Mammary epithelial cell (primary cell): ENCODE measurements at regions of chr1 and their contacts with region 1.

Region 1: DNA sequence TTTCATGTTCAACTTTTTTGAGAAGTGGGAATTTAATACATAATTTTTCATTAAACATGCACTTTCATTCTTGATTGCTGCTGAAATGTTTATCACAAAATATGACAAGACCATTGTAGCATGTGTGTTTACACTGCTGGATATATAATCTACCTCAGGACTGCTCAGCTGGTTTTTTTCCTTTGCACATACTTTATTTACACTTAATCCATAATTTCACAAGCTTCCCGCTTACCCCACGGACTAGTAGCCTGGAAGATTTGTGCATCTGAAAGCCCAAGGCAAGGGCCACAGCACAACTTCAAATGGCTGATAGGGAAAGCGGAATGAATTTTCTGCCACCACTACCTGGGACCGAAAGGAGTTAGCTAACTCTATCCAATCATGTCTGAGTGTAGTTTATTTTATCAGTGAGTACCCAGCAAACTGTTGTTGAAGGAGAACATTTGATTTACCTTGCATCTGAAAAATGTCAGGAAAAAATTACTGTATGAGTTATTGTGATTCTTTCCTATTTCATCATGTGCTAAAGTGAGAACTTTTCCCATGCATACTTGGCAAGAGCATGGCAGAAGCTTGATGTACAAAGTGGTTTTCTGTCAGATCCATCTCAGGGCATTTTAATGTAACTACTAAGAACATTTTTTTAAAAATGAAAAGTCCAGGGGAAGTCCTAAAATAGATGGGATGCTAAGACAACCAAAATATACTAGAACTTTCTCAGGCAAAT is 558.2 kb upstream of the USP24 start:
- DNase-seq: no peak
- H3K4me3 ChIP-seq: no peak overlapping the region
- H3K27ac ChIP-seq: no peak overlapping the region
- H3K4me1 ChIP-seq: no peaks in the 10 kb centered on the region
- H3K27me3 ChIP-seq: no peaks in the 10 kb centered on the region
- CTCF ChIP-seq: no peak

Region 2: DNA sequence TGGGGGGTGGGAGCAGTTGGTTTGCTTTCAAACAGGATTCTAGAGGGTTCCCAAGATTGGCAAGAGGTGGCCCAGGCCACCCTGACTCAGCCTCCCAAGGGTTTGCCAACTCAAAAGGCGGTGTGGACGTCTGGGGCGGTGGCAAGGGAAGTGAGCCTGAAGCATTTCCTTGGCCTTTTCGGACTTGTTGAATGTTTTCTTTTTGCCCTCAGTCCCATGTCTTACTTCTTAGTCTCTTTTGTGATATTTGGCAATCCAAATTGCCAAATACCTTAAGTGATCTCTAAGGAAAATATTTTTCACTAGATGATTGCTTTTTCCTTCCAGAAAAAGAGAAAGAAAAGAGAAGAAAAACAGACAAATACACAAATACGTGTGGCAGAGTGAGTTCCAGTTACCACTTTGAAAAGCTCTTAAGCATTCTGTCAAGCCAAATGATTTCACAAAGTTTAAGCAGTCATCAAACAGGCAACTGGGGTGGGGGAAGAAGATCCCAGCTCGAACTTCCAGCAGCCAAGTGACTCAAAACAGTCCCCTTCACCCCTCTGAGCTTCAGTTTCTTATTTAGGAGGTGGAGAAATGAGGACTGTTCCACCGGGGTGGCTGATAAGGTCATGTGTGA is 183.6 kb before region 1 on chr1:
- CTCF ChIA-PET with region 1: no interaction called
- dilution Hi-C with region 1: no loop called
- in situ Hi-C with region 1: no loop called
- intact Hi-C with region 1: no loop called
- DNase-seq: peak; percentile 58
- H3K4me3 ChIP-seq: no peak overlapping the region
- H3K27ac ChIP-seq: peak overlapping the region; percentile 35
- H3K4me1 ChIP-seq: peaks cover 28% of the 10 kb centered on the region
- H3K27me3 ChIP-seq: no peaks in the 10 kb centered on the region
- CTCF ChIP-seq: no peak

Region 3: DNA sequence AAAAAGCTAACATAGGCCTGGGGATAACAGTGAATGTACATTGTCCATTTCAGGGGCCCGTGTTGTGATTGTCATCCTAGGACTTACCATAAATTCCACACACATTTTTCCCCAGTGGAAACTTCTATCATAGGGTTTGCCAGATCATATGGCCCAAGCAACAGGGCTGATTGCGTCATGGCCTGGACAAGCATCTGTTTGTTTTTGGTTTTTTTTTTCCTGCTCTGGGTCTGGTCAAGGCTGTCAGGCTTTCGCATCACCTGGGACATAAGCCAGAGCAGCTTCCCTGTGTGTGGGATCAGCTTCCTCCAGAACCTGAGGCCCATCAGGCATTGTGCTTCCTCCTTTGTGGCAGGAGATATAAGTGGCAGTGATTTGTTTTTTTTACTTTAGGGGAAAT is 40.2 kb after region 1 on chr1:
- CTCF ChIA-PET with region 1: no interaction called
- dilution Hi-C with region 1: loop called (anchors 5 kb)
- in situ Hi-C with region 1: no loop called
- intact Hi-C with region 1: no loop called
- DNase-seq: no peak
- H3K4me3 ChIP-seq: no peak overlapping the region
- H3K27ac ChIP-seq: no peak overlapping the region
- H3K4me1 ChIP-seq: no peaks in the 10 kb centered on the region
- H3K27me3 ChIP-seq: no peaks in the 10 kb centered on the region
- CTCF ChIP-seq: no peak

Region 4: GRCh38 chr1:56709269-56709880 is 936.0 kb after region 1 on chr1:
- CTCF ChIA-PET with region 1: no interaction called
- dilution Hi-C with region 1: no loop called
- in situ Hi-C with region 1: no loop called
- intact Hi-C with region 1: no loop called
- DNase-seq: peak; percentile 38
- H3K4me3 ChIP-seq: no peak overlapping the region
- H3K27ac ChIP-seq: no peak overlapping the region
- H3K4me1 ChIP-seq: peaks cover 3% of the 10 kb centered on the region
- H3K27me3 ChIP-seq: no peaks in the 10 kb centered on the region
- CTCF ChIP-seq: peak; percentile 52 to 54